Endothelial cell of umbilical vein (primary cell): ENCODE measurements at regions of chr22 and their contacts with region 1.

Region 1: GRCh38 chr22:27107824-27108223 is 450.4 kb downstream of the MIAT start:
- DNase-seq: peak; percentile 92
- H3K4me3 ChIP-seq: no peak overlapping the region
- H3K27ac ChIP-seq: peak overlapping the region; percentile 62
- H3K4me1 ChIP-seq: peaks cover 58% of the 10 kb centered on the region
- H3K27me3 ChIP-seq: no peaks in the 10 kb centered on the region
- CTCF ChIP-seq: no peak
- POLR2A ChIP-seq: no peak

Region 2: GRCh38 chr22:27045103-27045947 is 62.5 kb before region 1 on chr22:
- CTCF ChIA-PET with region 1: no interaction called
- POLR2A ChIA-PET with region 1: no interaction called
- dilution Hi-C with region 1: no loop called
- intact Hi-C with region 1: loop called (anchors 2 kb)
- DNase-seq: peak; percentile 28
- H3K4me3 ChIP-seq: no peak overlapping the region
- H3K27ac ChIP-seq: no peak overlapping the region
- H3K4me1 ChIP-seq: peaks cover 6% of the 10 kb centered on the region
- H3K27me3 ChIP-seq: peaks cover 6 to 10% of the 10 kb centered on the region in 2 experiments
- CTCF ChIP-seq: no peak
- POLR2A ChIP-seq: no peak